Activated CD4-positive, alpha-beta T cell treated with anti-CD3 and anti-CD28 coated beads for 36 hours (primary cell): ENCODE measurements at regions of chr4 and their contacts with region 1.

Region 1: GRCh38 chr4:176319704-176320339 is at the start of gene SPCS3:
- DNase-seq: peak; percentile 96
- ATAC-seq: peak; percentile 94
- H3K4me3 Mint-ChIP-seq: peak within 1 kb of the TSS; percentile 97
- H3K27ac Mint-ChIP-seq: peak within 1 kb of the TSS; percentile 97
- H3K4me1 Mint-ChIP-seq: peaks cover 30% of the 10 kb centered on the region
- H3K27me3 Mint-ChIP-seq: no peaks in the 10 kb centered on the region
- total RNA-seq, gene SPCS3: 120 to 142 TPM

Region 2: DNA sequence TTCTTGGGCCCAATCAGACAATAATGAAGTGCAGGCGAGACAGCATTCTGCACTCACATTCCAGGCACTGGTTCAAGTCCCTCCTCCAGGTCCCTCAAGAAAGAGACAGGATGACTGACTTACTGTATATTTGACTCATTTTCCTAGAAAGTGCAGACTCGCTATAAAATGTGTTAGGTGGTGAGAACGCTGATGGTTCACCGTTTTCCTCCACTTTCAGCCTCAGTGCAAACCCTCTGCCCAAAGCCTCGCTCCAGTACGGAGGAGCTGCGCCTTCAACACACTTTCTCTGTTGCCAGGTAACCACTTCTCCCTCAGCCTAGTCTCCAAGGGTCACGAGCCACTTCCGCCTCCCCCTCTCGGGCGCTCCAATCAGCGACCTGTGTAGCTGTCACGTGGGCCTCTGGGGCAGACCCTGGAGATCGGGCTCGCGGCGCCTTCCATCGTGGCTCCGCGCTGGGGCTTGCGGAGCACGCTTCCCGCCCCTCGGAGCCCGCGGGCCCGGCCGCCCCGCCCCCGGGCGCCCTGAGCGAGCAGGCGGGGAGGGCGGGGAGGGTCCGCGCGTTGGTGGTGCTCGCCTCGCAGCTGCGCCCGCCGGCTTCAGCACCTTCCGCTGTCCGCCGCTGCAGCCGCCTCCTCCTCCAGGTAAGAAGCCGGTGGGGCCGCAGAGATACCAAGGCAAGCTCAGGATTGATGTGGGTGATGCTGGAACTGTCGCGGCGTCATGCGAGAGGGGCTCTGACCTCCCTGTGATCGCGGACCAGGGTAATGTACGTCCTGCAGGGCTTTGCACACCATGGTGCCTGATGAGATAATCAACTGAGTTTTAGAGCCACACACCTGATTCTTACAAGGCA is 254.2 kb before region 1 on chr4 and contains the start of gene WDR17:
- CTCF ChIA-PET with region 1: no interaction called
- POLR2A ChIA-PET with region 1: no interaction called
- intact Hi-C with region 1: loop called (anchors 1 to 2 kb)
- DNase-seq: peak; percentile 88
- ATAC-seq: peak; percentile 99
- H3K4me3 Mint-ChIP-seq: peak within 1 kb of the TSS; percentile 76
- H3K27ac Mint-ChIP-seq: peak within 1 kb of the TSS; percentile 19
- H3K4me1 Mint-ChIP-seq: peaks cover 11% of the 10 kb centered on the region
- H3K27me3 Mint-ChIP-seq: peaks cover 21% of the 10 kb centered on the region
- total RNA-seq, gene WDR17: 2.2 to 2.5 TPM

Region 3: GRCh38 chr4:176195184-176195978 is 124.4 kb before region 1 on chr4 and contains the start of gene SPATA4:
- CTCF ChIA-PET with region 1: no interaction called
- POLR2A ChIA-PET with region 1: no interaction called
- intact Hi-C with region 1: loop called (anchors 1 kb)
- DNase-seq: peak; percentile 97
- ATAC-seq: peak; percentile 91
- H3K4me3 Mint-ChIP-seq: peak within 1 kb of the TSS; percentile 60
- H3K27ac Mint-ChIP-seq: peak within 1 kb of the TSS; percentile 35
- H3K4me1 Mint-ChIP-seq: peaks cover 30% of the 10 kb centered on the region
- H3K27me3 Mint-ChIP-seq: peaks cover 25% of the 10 kb centered on the region
- total RNA-seq, gene SPATA4: not detected

Region 4: GRCh38 chr4:176333076-176333475 is 13.3 kb after region 1 on chr4:
- CTCF ChIA-PET with region 1: interaction called, 29 read pairs
- POLR2A ChIA-PET with region 1: no interaction called
- intact Hi-C with region 1: loop called in 1 of 2 experiments (anchors 1 kb)
- DNase-seq: no peak
- ATAC-seq: peak; percentile 42
- H3K4me3 Mint-ChIP-seq: no peak overlapping the region
- H3K27ac Mint-ChIP-seq: no peak overlapping the region
- H3K4me1 Mint-ChIP-seq: peaks cover 28% of the 10 kb centered on the region
- H3K27me3 Mint-ChIP-seq: no peaks in the 10 kb centered on the region

Region 5: GRCh38 chr4:176340871-176341685 is 21.3 kb after region 1 on chr4:
- CTCF ChIA-PET with region 1: interaction called, 29 read pairs
- POLR2A ChIA-PET with region 1: no interaction called
- intact Hi-C with region 1: no loop called
- DNase-seq: no peak
- ATAC-seq: peak; percentile 64
- H3K4me3 Mint-ChIP-seq: no peak overlapping the region
- H3K27ac Mint-ChIP-seq: no peak overlapping the region
- H3K4me1 Mint-ChIP-seq: peaks cover 6% of the 10 kb centered on the region
- H3K27me3 Mint-ChIP-seq: no peaks in the 10 kb centered on the region

Region 6: GRCh38 chr4:176469546-176469945 is 149.7 kb after region 1 on chr4:
- CTCF ChIA-PET with region 1: no interaction called
- POLR2A ChIA-PET with region 1: no interaction called
- intact Hi-C with region 1: no loop called
- DNase-seq: no peak
- ATAC-seq: no peak
- H3K4me3 Mint-ChIP-seq: no peak overlapping the region
- H3K27ac Mint-ChIP-seq: no peak overlapping the region
- H3K4me1 Mint-ChIP-seq: no peaks in the 10 kb centered on the region
- H3K27me3 Mint-ChIP-seq: no peaks in the 10 kb centered on the region

Region 7: GRCh38 chr4:177309522-177310371 is 989.9 kb after region 1 on chr4 and contains the start of gene NEIL3:
- CTCF ChIA-PET with region 1: no interaction called
- POLR2A ChIA-PET with region 1: no interaction called
- intact Hi-C with region 1: loop called in 1 of 2 experiments (anchors 5 kb)
- DNase-seq: peak; percentile 98
- ATAC-seq: peak; percentile 84
- H3K4me3 Mint-ChIP-seq: peak within 1 kb of the TSS; percentile 97
- H3K27ac Mint-ChIP-seq: peak within 1 kb of the TSS; percentile 84
- H3K4me1 Mint-ChIP-seq: peaks cover 27% of the 10 kb centered on the region
- H3K27me3 Mint-ChIP-seq: no peaks in the 10 kb centered on the region
- total RNA-seq, gene NEIL3: 18.1 to 18.6 TPM

Region 8: GRCh38 chr4:177441803-177442622 is 1122.2 kb after region 1 on chr4 and contains the start of gene AGA:
- CTCF ChIA-PET with region 1: no interaction called
- POLR2A ChIA-PET with region 1: no interaction called
- intact Hi-C with region 1: loop called in 1 of 2 experiments (anchors 2 kb)
- DNase-seq: peak; percentile 98
- ATAC-seq: peak; percentile 91
- H3K4me3 Mint-ChIP-seq: peak within 1 kb of the TSS; percentile 97
- H3K27ac Mint-ChIP-seq: peak within 1 kb of the TSS; percentile 100
- H3K4me1 Mint-ChIP-seq: peaks cover 24% of the 10 kb centered on the region
- H3K27me3 Mint-ChIP-seq: no peaks in the 10 kb centered on the region
- total RNA-seq, gene AGA: 20.8 to 27.7 TPM